Sigmoid colon (tissue), 7 donors: ENCODE measurements at regions of chr2 and their contacts with region 1.

Region 1: DNA sequence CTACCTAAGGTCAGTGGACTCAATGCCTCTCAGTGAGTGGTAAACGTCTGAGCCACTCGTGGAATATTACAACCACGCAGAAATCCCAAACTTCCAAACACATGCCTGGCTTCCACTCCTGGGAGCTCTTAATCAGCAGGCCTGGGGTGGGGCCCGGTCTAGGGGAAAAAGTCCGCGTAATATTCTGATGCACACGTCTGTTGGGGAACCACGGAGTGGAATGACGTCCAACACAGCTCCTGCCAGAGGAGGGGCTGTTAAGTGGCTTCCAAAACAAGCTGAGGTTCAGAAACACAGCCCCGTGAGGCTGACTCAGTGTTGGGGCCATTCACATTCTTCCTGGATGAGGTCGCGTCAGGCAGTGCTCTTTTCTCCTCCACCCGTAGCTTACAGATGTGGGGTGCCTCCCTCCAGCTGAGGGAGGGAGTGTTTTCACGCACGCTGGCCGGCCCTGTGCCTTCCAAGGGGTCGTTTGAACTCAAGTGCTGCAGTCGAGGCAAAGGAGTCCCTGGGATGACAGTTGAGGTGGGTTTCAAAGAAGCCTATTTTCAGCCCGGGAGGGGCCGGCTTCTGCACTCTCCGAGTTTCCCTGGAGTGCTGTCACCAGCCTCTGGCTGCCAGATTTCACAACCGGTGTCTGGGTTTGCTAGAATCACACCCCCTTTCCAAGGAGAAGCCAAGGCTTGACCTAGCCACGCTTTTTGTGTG is 73.1 kb downstream of the ACKR3 start:
- DNase-seq: peak; percentile 98
- H3K4me3 ChIP-seq: peak overlapping the region in 1 of 4 donors; percentile 10
- H3K27ac ChIP-seq: peak overlapping the region; percentile 77 to 91 (median 81)
- H3K4me1 ChIP-seq: peaks cover 0 to 22% (median 20%) of the 10 kb centered on the region in 4 donors
- H3K27me3 ChIP-seq: no peaks in the 10 kb centered on the region
- CTCF ChIP-seq: no peak
- EP300 ChIP-seq: peak; percentile 57 to 99 (median 82)
- POLR2A ChIP-seq: no peak

Region 2: GRCh38 chr2:236507393-236508085 is 135.2 kb before region 1 on chr2:
- intact Hi-C with region 1: loop called (anchors 5 kb)
- DNase-seq: peak; percentile 77
- H3K4me3 ChIP-seq: peak overlapping the region; percentile 4 to 51 (median 45)
- H3K27ac ChIP-seq: no peak overlapping the region
- H3K4me1 ChIP-seq: peaks cover 0 to 10% (median 7%) of the 10 kb centered on the region in 4 donors
- H3K27me3 ChIP-seq: peaks cover 0 to 11% (median 5%) of the 10 kb centered on the region in 3 donors
- CTCF ChIP-seq: no peak
- EP300 ChIP-seq: no peak
- POLR2A ChIP-seq: no peak

Region 3: GRCh38 chr2:236569573-236569973 is 73.2 kb before region 1 on chr2 and contains the start of gene ACKR3:
- intact Hi-C with region 1: loop called (anchors 5 kb)
- DNase-seq: peak; percentile 92
- H3K4me3 ChIP-seq: peak within 1 kb of the TSS; percentile 28 to 57 (median 46)
- H3K27ac ChIP-seq: peak within 1 kb of the TSS; percentile 85 to 93 (median 87)
- H3K4me1 ChIP-seq: peaks cover 0 to 76% (median 47%) of the 10 kb centered on the region in 4 donors
- H3K27me3 ChIP-seq: no peaks in the 10 kb centered on the region
- CTCF ChIP-seq: peak in 3 of 4 experiments; percentile 30 to 44 (median 32)
- EP300 ChIP-seq: no peak
- POLR2A ChIP-seq: peak in 1 of 2 donors; percentile 60
- total RNA-seq, gene ACKR3: 17.0 to 39.1 (median 21.6) TPM

Region 4: DNA sequence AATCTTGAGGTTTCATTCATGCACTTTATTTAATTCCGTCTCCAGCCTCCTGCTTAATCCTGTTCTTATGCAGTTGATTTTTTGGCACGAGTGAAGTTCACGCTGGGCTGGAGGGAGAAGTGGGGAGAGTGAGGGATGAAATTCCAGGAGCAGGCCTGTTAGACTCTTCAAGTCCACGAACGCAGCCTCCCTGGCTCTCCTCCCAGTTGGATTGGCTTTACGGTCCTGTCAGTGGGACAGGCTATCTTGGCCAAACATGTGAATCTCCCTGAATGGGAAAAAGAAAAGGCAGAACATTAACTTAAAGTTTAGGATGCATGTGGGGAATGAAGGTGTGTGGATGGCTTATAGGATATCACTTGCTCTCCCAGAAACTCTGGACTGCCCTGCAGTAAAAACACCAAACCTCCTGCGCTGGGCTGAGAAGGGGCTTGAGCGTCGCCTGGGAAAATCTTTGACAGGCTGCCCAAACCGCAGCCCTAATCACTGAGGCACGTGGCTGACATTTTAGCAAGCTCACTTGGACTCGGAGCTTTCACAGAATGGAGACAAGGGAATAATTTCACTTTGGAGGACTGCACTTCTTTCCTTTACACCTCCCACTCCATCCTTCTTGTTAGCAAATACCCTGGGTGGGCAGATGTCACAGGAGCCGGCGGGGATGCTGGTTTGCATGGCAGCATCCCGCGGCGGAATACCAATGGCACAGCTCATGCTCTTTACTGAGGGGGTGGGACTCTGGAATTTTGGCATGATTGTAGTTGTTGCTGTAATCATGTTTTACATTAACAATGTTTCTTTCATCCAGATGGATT is 20.8 kb after region 1 on chr2:
- intact Hi-C with region 1: loop called (anchors 2 kb)
- DNase-seq: peak; percentile 94
- H3K4me3 ChIP-seq: no peak overlapping the region
- H3K27ac ChIP-seq: peak overlapping the region; percentile 61 to 82 (median 76)
- H3K4me1 ChIP-seq: peaks cover 0 to 53% (median 49%) of the 10 kb centered on the region in 4 donors
- H3K27me3 ChIP-seq: no peaks in the 10 kb centered on the region
- CTCF ChIP-seq: no peak
- EP300 ChIP-seq: peak in 3 of 4 donors; percentile 7 to 63 (median 16)
- POLR2A ChIP-seq: no peak

Region 5: DNA sequence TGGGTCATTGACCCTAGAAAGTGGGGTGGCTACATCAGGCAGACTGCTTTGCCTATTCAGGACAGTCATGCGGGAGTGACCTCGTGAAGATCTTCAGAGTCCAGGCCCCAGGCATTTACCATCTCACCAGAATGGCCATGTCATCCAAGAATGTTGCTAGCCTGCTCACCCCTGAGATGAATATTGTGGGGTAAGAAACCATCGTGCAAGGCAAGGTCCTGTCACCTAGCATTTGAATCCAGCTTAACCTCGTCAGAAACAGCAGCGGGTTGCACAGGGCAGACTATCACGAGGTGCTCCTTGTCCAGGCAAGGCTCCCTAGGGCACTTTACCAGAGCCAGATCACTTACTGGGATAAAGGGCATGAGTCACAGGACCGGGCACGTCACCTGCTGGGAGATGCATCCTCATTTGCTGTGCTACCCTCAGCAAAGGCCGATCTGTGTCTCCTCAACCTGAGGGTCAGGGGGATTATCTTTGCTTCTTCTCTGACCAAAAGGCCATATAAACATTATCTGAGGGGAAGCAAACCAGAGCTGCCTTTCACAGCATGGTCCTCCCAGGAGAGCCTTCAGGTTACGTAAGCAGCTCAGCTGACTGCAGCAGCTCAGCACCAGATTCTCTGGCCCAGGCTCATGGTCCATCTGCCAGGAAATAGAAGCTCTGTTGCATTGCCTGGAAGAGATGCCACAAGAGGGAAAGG is 89.3 kb after region 1 on chr2:
- intact Hi-C with region 1: loop called (anchors 5 kb)
- DNase-seq: peak; percentile 95
- H3K4me3 ChIP-seq: no peak overlapping the region
- H3K27ac ChIP-seq: peak overlapping the region; percentile 39 to 79 (median 67)
- H3K4me1 ChIP-seq: peaks cover 0 to 25% (median 15%) of the 10 kb centered on the region in 4 donors
- H3K27me3 ChIP-seq: no peaks in the 10 kb centered on the region
- CTCF ChIP-seq: no peak
- EP300 ChIP-seq: peak; percentile 72 to 97 (median 78)
- POLR2A ChIP-seq: no peak